ENCODE measurements at regions of chr5 and their contacts with region 1.

Region 1: GRCh38 chr5:118791926-118792734 is 196.2 kb downstream of the DTWD2 start:
- DNase-seq: no peak
- H3K4me3 ChIP-seq: peak overlapping the region in 1 of 2 donors; percentile 40
- H3K27ac ChIP-seq: no peak overlapping the region
- H3K4me1 ChIP-seq: no peaks in the 10 kb centered on the region
- H3K27me3 ChIP-seq: no peaks in the 10 kb centered on the region
- CTCF ChIP-seq: peak; percentile 48 to 81 (median 62)

Region 2: DNA sequence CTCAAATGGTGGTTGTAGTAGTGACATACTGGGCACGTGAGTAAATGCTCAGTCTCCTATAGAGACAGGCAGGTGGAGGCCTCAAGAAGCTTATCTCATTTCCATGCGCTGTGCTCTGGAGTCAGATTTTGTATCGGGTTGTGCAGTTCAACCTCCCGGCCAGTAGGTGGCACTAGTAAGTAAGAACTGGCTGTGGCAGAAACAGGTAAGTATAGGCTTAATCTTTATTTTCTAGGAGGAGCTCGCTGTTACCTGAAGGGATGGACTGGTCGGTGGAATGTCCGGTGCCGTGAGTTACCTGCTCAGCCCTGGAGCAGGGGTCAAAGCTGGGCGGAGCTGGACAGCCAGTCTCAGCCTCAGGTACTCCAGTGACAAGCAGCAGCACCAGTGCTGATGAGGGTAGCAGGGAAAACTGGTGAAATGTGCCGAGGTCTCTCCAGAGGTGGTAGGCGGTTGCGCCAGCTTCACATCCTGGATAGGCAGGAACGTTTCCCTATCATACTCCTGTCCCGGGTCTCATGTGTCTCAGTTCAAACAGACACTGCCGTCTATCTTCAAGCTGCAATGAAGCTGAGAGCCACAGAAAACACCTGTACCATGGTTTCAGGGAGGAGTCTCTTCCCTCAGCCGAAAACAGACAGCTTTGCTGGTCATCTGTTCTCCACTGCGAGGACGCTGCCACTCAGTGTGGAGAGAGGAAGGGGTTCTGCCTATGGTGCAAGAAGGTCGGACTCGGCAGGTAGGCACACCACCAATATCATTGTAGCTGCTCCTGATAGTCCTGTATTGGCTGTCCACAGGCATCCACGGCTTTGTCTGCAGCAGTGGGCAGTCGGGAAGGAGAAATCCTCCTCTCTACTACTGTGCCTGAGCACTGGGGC is 1337.2 kb before region 1 on chr5:
- intact Hi-C with region 1: loop called (anchors 5 kb)
- DNase-seq: no peak
- H3K4me3 ChIP-seq: no peak overlapping the region
- H3K27ac ChIP-seq: no peak overlapping the region
- H3K4me1 ChIP-seq: no peaks in the 10 kb centered on the region
- H3K27me3 ChIP-seq: no peaks in the 10 kb centered on the region
- CTCF ChIP-seq: peak; percentile 14 to 65 (median 61)

Measured in ascending aorta (tissue), 2 donors.